GM18951 (cell line): ENCODE measurements at regions of chr4 and their contacts with region 1.

Region 1: GRCh38 chr4:4256799-4257198 is 8.8 kb upstream of the TMEM128 start:
- POLR2A ChIP-seq: no peak

Region 2: GRCh38 chr4:4334798-4335520 is 78.2 kb after region 1 on chr4:
- in situ Hi-C with region 1: loop called (anchors 10 kb)
- POLR2A ChIP-seq: no peak